Heart right ventricle (tissue), 16 donors: ENCODE measurements at regions of chr18 and their contacts with region 1.

Region 1: GRCh38 chr18:44803019-44803650 is 122.4 kb downstream of the SETBP1 start:
- DNase-seq: peak in 1 of 2 donors; percentile 44
- ATAC-seq: peak; percentile 86 to 95 (median 90)
- H3K4me3 ChIP-seq: no peak overlapping the region
- H3K27ac ChIP-seq: peak overlapping the region in 9 of 10 donors; percentile 21 to 67 (median 61)
- H3K4me1 ChIP-seq: peaks cover 6 to 78% (median 36%) of the 10 kb centered on the region in 9 donors
- H3K27me3 ChIP-seq: peaks cover 0 to 5% (median 0%) of the 10 kb centered on the region in 7 donors
- CTCF ChIP-seq: no peak

Region 2: GRCh38 chr18:44537521-44537920 is 265.6 kb before region 1 on chr18:
- intact Hi-C with region 1: no loop called
- DNase-seq: no peak
- ATAC-seq: no peak
- H3K4me3 ChIP-seq: no peak overlapping the region
- H3K27ac ChIP-seq: no peak overlapping the region
- H3K4me1 ChIP-seq: peaks cover 0 to 8% (median 0%) of the 10 kb centered on the region in 9 donors
- H3K27me3 ChIP-seq: no peaks in the 10 kb centered on the region
- CTCF ChIP-seq: no peak

Region 3: GRCh38 chr18:44700652-44701051 is 102.5 kb before region 1 on chr18:
- intact Hi-C with region 1: loop called in 1 of 10 experiments (anchors 10 kb)
- DNase-seq: peak in 1 of 2 donors; percentile 26
- ATAC-seq: peak in 6 of 8 donors; percentile 50 to 75 (median 65)
- H3K4me3 ChIP-seq: no peak overlapping the region
- H3K27ac ChIP-seq: peak overlapping the region in 5 of 10 donors; percentile 4 to 73 (median 21)
- H3K4me1 ChIP-seq: peaks cover 10 to 53% (median 26%) of the 10 kb centered on the region in 9 donors
- H3K27me3 ChIP-seq: peaks cover 0 to 21% (median 0%) of the 10 kb centered on the region in 7 donors
- CTCF ChIP-seq: no peak

Region 4: DNA sequence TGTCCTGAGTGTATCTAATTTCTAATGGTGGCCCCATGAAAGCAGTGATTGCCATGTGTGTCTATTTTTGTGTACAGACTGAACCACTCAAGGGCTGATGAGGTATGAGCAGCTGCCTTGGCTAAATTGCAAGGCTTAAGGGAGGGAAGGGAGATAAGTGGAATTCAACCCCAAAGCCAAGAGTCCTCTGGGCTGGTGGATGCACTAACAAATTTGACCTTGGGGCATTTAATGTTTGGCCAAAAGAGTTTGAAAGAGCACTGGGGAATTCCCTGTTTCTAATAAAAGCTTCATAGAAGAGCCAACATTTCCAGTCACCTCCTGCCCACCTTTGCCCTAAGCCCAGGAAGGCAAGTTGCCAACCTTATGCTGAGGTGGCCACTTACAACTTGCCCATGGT is 49.7 kb after region 1 on chr18:
- intact Hi-C with region 1: loop called in 1 of 10 experiments (anchors 10 kb)
- DNase-seq: peak in 1 of 2 donors; percentile 45
- ATAC-seq: peak; percentile 79 to 90 (median 87)
- H3K4me3 ChIP-seq: no peak overlapping the region
- H3K27ac ChIP-seq: peak overlapping the region in 2 of 10 donors; percentile 29 to 46
- H3K4me1 ChIP-seq: peaks cover 0 to 60% (median 27%) of the 10 kb centered on the region in 9 donors
- H3K27me3 ChIP-seq: no peaks in the 10 kb centered on the region
- CTCF ChIP-seq: no peak

Region 5: GRCh38 chr18:44866103-44866502 is 63.0 kb after region 1 on chr18:
- intact Hi-C with region 1: no loop called
- DNase-seq: no peak
- ATAC-seq: no peak
- H3K4me3 ChIP-seq: no peak overlapping the region
- H3K27ac ChIP-seq: no peak overlapping the region
- H3K4me1 ChIP-seq: peaks cover 0 to 4% (median 0%) of the 10 kb centered on the region in 9 donors
- H3K27me3 ChIP-seq: peaks cover 0 to 7% (median 0%) of the 10 kb centered on the region in 7 donors
- CTCF ChIP-seq: no peak

Region 6: GRCh38 chr18:44887227-44887631 is 84.1 kb after region 1 on chr18:
- intact Hi-C with region 1: loop called in 1 of 10 experiments (anchors 10 kb)
- DNase-seq: peak in 1 of 2 donors; percentile 32
- ATAC-seq: peak; percentile 60 to 97 (median 86)
- H3K4me3 ChIP-seq: no peak overlapping the region
- H3K27ac ChIP-seq: no peak overlapping the region
- H3K4me1 ChIP-seq: peaks cover 0 to 33% (median 12%) of the 10 kb centered on the region in 9 donors
- H3K27me3 ChIP-seq: peaks cover 0 to 22% (median 7%) of the 10 kb centered on the region in 7 donors
- CTCF ChIP-seq: peak in 2 of 9 donors; percentile 11

Region 7: GRCh38 chr18:44943311-44943881 is 140.3 kb after region 1 on chr18:
- intact Hi-C with region 1: no loop called
- DNase-seq: no peak
- ATAC-seq: peak in 1 of 8 donors; percentile 57
- H3K4me3 ChIP-seq: no peak overlapping the region
- H3K27ac ChIP-seq: no peak overlapping the region
- H3K4me1 ChIP-seq: peaks cover 0 to 15% (median 7%) of the 10 kb centered on the region in 9 donors
- H3K27me3 ChIP-seq: no peaks in the 10 kb centered on the region
- CTCF ChIP-seq: no peak